ENCODE measurements at regions of chr3 and their contacts with region 1.

Region 1: DNA sequence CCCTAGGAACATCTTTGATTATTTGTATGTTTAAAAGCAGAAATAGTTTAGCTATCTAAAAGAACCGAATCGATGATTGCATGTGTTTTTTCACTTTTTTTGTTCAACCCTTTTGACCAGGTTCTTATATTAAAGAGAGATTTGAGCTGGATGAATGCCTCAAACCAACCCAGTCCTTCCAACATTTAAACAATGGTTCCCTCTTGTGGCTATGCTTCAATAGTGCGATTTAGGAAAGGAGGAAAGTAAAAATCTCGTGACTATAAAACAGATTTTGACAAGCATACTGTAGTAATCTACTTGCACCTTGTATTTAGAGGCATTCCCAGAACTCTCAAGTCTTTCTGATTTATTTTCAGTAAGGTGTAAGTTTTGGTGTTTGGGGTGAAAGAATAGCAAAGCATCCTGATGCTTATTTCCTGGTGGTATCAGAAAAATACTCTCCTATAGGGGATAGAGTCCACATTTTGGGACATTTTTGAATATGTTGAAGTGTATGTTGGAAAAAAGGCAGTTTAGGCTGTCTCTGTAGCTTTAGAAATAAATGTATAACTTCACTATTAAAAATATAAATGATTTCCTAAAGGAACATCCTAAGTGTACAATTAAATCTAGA is 159.6 kb upstream of the KCNH8 start:
- DNase-seq: peak in 1 of 2 donors; percentile 67
- ATAC-seq: peak; percentile 41 to 52 (median 50)
- H3K4me3 ChIP-seq: no peak overlapping the region
- H3K4me3 Mint-ChIP-seq: no peak overlapping the region
- H3K27ac ChIP-seq: no peak overlapping the region
- H3K27ac Mint-ChIP-seq: no peak overlapping the region
- H3K4me1 ChIP-seq: no peaks in the 10 kb centered on the region
- H3K4me1 Mint-ChIP-seq: no peaks in the 10 kb centered on the region
- H3K27me3 ChIP-seq: no peaks in the 10 kb centered on the region
- H3K27me3 Mint-ChIP-seq: peaks cover 5 to 8% of the 10 kb centered on the region in 2 donors
- CTCF ChIP-seq: peak; percentile 55

Region 2: GRCh38 chr3:17258823-17259436 is 1729.8 kb before region 1 on chr3:
- intact Hi-C with region 1: loop called (anchors 2 kb)
- DNase-seq: peak in 1 of 2 donors; percentile 75
- ATAC-seq: peak in 1 of 3 donors; percentile 40
- H3K4me3 ChIP-seq: no peak overlapping the region
- H3K4me3 Mint-ChIP-seq: no peak overlapping the region
- H3K27ac ChIP-seq: no peak overlapping the region
- H3K27ac Mint-ChIP-seq: no peak overlapping the region
- H3K4me1 ChIP-seq: no peaks in the 10 kb centered on the region
- H3K4me1 Mint-ChIP-seq: no peaks in the 10 kb centered on the region
- H3K27me3 ChIP-seq: no peaks in the 10 kb centered on the region
- H3K27me3 Mint-ChIP-seq: no peaks in the 10 kb centered on the region
- CTCF ChIP-seq: peak; percentile 94

Region 3: DNA sequence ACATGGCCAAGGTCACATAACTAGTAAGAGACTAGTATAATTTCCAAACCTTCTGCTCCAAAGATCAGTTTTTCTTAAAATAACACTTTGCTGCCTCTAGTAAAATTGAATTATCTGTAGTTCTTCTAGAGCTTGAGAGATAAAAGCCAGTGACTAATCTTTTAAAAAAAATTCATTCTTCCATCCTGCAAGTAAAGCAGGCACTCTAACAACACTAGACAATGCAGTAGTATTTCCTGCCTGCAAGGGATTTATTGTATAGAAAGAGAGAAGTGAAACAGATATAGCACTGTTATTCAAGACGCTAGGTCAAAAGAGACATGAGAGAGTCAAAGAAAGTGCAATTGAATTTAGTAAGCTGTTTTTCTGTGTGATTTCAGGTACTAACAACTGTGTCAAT is 1086.8 kb before region 1 on chr3:
- intact Hi-C with region 1: loop called (anchors 10 kb)
- DNase-seq: no peak
- ATAC-seq: no peak
- H3K4me3 ChIP-seq: no peak overlapping the region
- H3K4me3 Mint-ChIP-seq: no peak overlapping the region
- H3K27ac ChIP-seq: no peak overlapping the region
- H3K27ac Mint-ChIP-seq: no peak overlapping the region
- H3K4me1 ChIP-seq: no peaks in the 10 kb centered on the region
- H3K4me1 Mint-ChIP-seq: no peaks in the 10 kb centered on the region
- H3K27me3 ChIP-seq: no peaks in the 10 kb centered on the region
- H3K27me3 Mint-ChIP-seq: peaks cover 5 to 10% of the 10 kb centered on the region in 2 donors
- CTCF ChIP-seq: no peak

Region 4: GRCh38 chr3:18847583-18848197 is 141.0 kb before region 1 on chr3:
- intact Hi-C with region 1: loop called (anchors 5 kb)
- DNase-seq: peak in 1 of 2 donors; percentile 37
- ATAC-seq: peak in 1 of 3 donors; percentile 44
- H3K4me3 ChIP-seq: no peak overlapping the region
- H3K4me3 Mint-ChIP-seq: no peak overlapping the region
- H3K27ac ChIP-seq: no peak overlapping the region
- H3K27ac Mint-ChIP-seq: no peak overlapping the region
- H3K4me1 ChIP-seq: no peaks in the 10 kb centered on the region
- H3K4me1 Mint-ChIP-seq: peaks cover 0 to 5% of the 10 kb centered on the region in 2 donors
- H3K27me3 ChIP-seq: no peaks in the 10 kb centered on the region
- H3K27me3 Mint-ChIP-seq: peaks cover 8 to 9% of the 10 kb centered on the region in 2 donors
- CTCF ChIP-seq: peak; percentile 44

Region 5: GRCh38 chr3:19074257-19074900 is 85.7 kb after region 1 on chr3:
- intact Hi-C with region 1: no loop called
- DNase-seq: no peak
- ATAC-seq: no peak
- H3K4me3 ChIP-seq: no peak overlapping the region
- H3K4me3 Mint-ChIP-seq: no peak overlapping the region
- H3K27ac ChIP-seq: no peak overlapping the region
- H3K27ac Mint-ChIP-seq: no peak overlapping the region
- H3K4me1 ChIP-seq: no peaks in the 10 kb centered on the region
- H3K4me1 Mint-ChIP-seq: no peaks in the 10 kb centered on the region
- H3K27me3 ChIP-seq: no peaks in the 10 kb centered on the region
- H3K27me3 Mint-ChIP-seq: no peaks in the 10 kb centered on the region
- CTCF ChIP-seq: no peak